ENCODE measurements at regions of chr2 and their contacts with region 1.

Region 1: GRCh38 chr2:232521959-232522622 is 1.9 kb downstream of the PRSS56 start:
- DNase-seq: peak in 1 of 2 experiments; percentile 58
- H3K4me3 ChIP-seq: no peak overlapping the region
- H3K27ac ChIP-seq: no peak overlapping the region
- H3K4me1 ChIP-seq: no peaks in the 10 kb centered on the region
- H3K27me3 ChIP-seq: peaks cover 55% of the 10 kb centered on the region
- CTCF ChIP-seq: peak; percentile 75

Region 2: DNA sequence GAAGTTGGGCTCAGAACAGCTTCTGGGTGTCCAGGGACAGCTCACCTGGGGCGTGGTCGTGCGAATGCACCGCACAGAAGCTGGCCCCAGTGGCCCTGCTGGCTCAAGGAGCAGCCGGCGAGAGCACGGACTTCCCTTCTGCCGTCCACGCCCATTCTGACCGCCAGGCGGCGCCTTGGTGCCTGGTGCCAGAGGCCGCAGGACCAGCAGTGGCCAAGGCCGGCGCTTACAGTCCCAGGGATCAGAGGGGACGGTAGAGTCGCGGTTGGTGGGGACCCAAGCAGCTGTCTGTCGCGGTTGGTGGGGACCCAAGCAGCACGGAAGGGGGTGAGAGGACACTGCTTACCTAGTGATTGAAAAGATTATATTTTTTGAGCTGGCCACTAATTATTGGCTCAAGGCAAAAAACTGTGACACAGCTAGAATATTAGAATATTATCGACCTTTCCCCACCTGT is 621.6 kb before region 1 on chr2:
- CTCF ChIA-PET with region 1: no interaction called
- POLR2A ChIA-PET with region 1: no interaction called
- intact Hi-C with region 1: loop called (anchors 10 kb)
- DNase-seq: peak; percentile 64 to 88
- H3K4me3 ChIP-seq: no peak overlapping the region
- H3K27ac ChIP-seq: no peak overlapping the region
- H3K4me1 ChIP-seq: no peaks in the 10 kb centered on the region
- H3K27me3 ChIP-seq: no peaks in the 10 kb centered on the region
- CTCF ChIP-seq: peak; percentile 91

Measured in PC-9 (cell line).